K562 (cell line): ENCODE measurements at regions of chr1 and their contacts with region 1.

Region 1: DNA sequence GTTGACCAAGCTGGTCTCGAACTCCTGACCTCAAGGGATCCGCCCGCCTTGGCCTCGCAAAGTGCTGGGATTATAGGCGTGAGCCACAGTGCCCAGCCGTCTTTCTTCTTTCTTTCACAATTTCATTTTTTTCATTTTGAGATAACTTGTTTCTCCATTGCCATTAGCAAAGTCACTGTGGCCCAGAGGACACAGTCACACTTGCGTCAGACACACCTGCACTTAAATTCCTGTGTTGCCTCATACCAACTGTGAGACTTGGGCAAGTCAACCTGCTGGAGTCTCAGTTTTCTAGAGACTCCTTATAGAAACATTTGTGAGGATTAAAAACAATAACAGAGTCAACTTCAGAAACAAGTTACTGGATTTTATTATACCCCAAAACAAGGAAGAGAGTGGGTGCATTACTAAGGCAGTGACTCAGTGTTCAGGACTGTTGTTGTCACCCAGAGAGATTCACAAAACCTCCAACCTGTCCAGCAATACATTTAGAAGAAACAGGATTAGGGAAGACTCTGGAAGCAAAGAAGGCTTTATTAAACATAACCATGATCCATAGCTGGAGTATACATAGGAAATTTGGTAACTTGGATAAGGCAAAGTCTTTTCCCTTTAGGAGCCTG is 2.6 kb downstream of the TEDDM1 start:
- DNase-seq: no peak
- ATAC-seq: no peak
- H3K4me3 ChIP-seq: no peak overlapping the region
- H3K27ac ChIP-seq: no peak overlapping the region
- H3K4me1 ChIP-seq: peaks cover 0 to 22% of the 10 kb centered on the region in 2 experiments; a peak in 3 of 5 replicates
- H3K27me3 ChIP-seq: no peaks in the 10 kb centered on the region
- CTCF ChIP-seq: no peak
- EP300 ChIP-seq: no peak
- POLR2A ChIP-seq: no peak
- RAD21 ChIP-seq: no peak

Region 2: DNA sequence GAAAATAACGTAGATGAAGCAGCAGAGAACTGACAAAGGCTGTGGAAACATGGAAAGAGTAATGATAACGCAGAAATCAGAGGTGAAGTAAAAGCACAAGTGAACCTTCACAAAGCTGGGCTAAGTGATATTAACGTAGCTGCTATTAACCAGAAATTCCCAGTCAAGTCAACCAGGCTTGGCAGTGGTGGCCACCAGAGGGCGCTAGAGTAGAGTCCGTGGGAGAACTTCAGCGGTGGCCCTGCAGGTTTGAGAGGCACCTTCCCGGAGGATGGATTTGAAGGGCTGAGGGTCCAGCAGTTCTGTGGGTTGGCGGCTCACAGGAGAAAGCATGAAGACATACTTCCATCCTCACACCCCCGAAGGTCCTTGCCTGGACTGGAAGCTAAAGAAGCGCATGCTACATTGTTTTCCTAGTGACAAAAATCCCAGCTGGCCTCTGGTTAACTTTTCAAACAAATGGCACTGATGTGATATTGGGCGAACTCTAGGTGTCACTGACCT is 254.7 kb before region 1 on chr1:
- CTCF ChIA-PET with region 1: interaction called, 53 read pairs
- POLR2A ChIA-PET with region 1: interaction called, 137 read pairs
- in situ Hi-C with region 1: loop called (anchors 5 kb)
- intact Hi-C with region 1: loop called (anchors 1 kb)
- DNase-seq: peak; percentile 83 to 93 (median 88)
- ATAC-seq: peak; percentile 92
- H3K4me3 ChIP-seq: no peak overlapping the region
- H3K27ac ChIP-seq: no peak overlapping the region
- H3K4me1 ChIP-seq: peaks cover 12% of the 10 kb centered on the region in 2 experiments
- H3K27me3 ChIP-seq: peaks cover 0 to 4% of the 10 kb centered on the region in 2 experiments; a peak in 2 of 5 replicates
- CTCF ChIP-seq: peak; percentile 97 to 99 (median 98)
- EP300 ChIP-seq: peak; percentile 25; the same call in 1 of the 2 replicates
- POLR2A ChIP-seq: no peak
- RAD21 ChIP-seq: peak; percentile 96 to 100

Region 3: GRCh38 chr1:182257369-182258063 is 140.4 kb before region 1 on chr1:
- CTCF ChIA-PET with region 1: no interaction called
- POLR2A ChIA-PET with region 1: no interaction called
- in situ Hi-C with region 1: no loop called
- intact Hi-C with region 1: loop called (anchors 2 kb)
- DNase-seq: peak; percentile 79 to 95 (median 86)
- ATAC-seq: peak; percentile 93
- H3K4me3 ChIP-seq: no peak overlapping the region
- H3K27ac ChIP-seq: peak overlapping the region; percentile 83
- H3K4me1 ChIP-seq: peaks cover 37 to 47% of the 10 kb centered on the region in 2 experiments
- H3K27me3 ChIP-seq: no peaks in the 10 kb centered on the region
- CTCF ChIP-seq: peak in 1 of 3 experiments; percentile 22; a peak in 2 of 6 replicates
- EP300 ChIP-seq: peak; percentile 94
- POLR2A ChIP-seq: no peak
- RAD21 ChIP-seq: peak; percentile 30 to 33; a peak in 3 of 4 replicates

Region 4: GRCh38 chr1:182317611-182318161 is 80.2 kb before region 1 on chr1:
- CTCF ChIA-PET with region 1: interaction called, 5 read pairs
- POLR2A ChIA-PET with region 1: interaction called, 3 read pairs
- in situ Hi-C with region 1: no loop called
- intact Hi-C with region 1: loop called (anchors 1 kb)
- DNase-seq: no peak
- ATAC-seq: no peak
- H3K4me3 ChIP-seq: no peak overlapping the region
- H3K27ac ChIP-seq: no peak overlapping the region
- H3K4me1 ChIP-seq: peaks cover 13 to 21% of the 10 kb centered on the region in 2 experiments
- H3K27me3 ChIP-seq: no peaks in the 10 kb centered on the region
- CTCF ChIP-seq: no peak
- EP300 ChIP-seq: no peak
- POLR2A ChIP-seq: no peak
- RAD21 ChIP-seq: no peak

Region 5: DNA sequence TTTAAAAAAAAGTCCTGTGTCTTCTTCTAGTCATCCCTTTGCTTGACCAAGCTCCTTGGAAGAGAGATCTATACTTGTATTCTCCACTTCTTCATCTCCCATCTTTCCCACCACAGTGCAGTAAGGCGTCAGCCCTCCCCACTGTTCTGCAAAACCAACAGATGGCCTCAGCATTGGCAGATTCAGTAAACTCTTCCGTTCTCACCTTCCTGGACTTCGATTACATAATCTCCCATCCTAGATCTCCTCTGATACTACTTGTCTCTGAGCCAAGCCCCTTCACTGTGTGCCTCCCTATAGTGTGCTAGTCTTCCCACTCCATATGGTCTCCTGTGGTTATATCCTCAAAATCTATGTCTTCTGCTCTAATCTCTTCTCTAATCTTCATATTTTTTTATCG is 1641.2 kb after region 1 on chr1:
- CTCF ChIA-PET with region 1: no interaction called
- POLR2A ChIA-PET with region 1: no interaction called
- in situ Hi-C with region 1: no loop called
- intact Hi-C with region 1: no loop called
- DNase-seq: no peak
- ATAC-seq: no peak
- H3K4me3 ChIP-seq: no peak overlapping the region
- H3K27ac ChIP-seq: no peak overlapping the region
- H3K4me1 ChIP-seq: peaks cover 18 to 21% of the 10 kb centered on the region in 2 experiments
- H3K27me3 ChIP-seq: no peaks in the 10 kb centered on the region
- CTCF ChIP-seq: no peak
- EP300 ChIP-seq: 0 out of 2 replicates have a peak, but pooled peaks have one; percentile 7
- POLR2A ChIP-seq: no peak
- RAD21 ChIP-seq: no peak